PC-9 (cell line): ENCODE measurements at regions of chr2 and their contacts with region 1.

Region 1: GRCh38 chr2:18814387-18814786 is 225.0 kb upstream of the NT5C1B start:
- DNase-seq: no peak
- H3K4me3 ChIP-seq: no peak overlapping the region
- H3K27ac ChIP-seq: no peak overlapping the region
- H3K4me1 ChIP-seq: no peaks in the 10 kb centered on the region
- H3K27me3 ChIP-seq: no peaks in the 10 kb centered on the region
- CTCF ChIP-seq: no peak

Region 2: GRCh38 chr2:18855027-18855426 is 40.6 kb after region 1 on chr2:
- CTCF ChIA-PET with region 1: no interaction called
- POLR2A ChIA-PET with region 1: no interaction called
- intact Hi-C with region 1: no loop called
- DNase-seq: no peak
- H3K4me3 ChIP-seq: no peak overlapping the region
- H3K27ac ChIP-seq: no peak overlapping the region
- H3K4me1 ChIP-seq: no peaks in the 10 kb centered on the region
- H3K27me3 ChIP-seq: no peaks in the 10 kb centered on the region
- CTCF ChIP-seq: peak; percentile 58

Region 3: DNA sequence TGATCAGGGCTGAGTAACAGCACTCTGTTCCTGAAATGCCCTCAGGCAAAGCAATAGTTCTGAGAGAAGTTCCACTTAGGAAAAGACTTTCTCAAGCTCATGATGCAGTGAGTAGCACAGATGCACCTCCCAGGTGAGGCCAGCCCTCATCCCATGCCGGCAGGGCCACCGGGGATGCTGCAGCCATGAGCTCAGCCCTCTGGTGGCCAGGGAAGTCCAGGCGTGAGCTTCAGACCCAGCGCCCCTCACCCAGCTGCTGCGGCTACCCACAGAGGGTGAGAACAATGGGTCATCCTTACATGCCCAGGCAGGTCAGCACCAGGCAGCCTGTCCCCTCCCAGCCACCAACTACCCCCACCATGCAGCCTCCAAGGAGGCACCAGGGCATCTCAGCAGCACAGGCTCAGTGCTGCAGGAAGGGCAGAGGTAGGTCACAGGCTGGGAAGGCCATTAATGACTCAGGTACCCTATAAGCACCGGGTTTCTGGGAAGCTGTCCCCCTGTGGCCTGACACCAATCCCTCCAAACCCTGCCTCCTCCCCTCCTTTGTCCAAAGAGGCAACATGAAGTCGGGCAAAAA is 1036.8 kb after region 1 on chr2:
- CTCF ChIA-PET with region 1: no interaction called
- POLR2A ChIA-PET with region 1: interaction called, 10 read pairs
- intact Hi-C with region 1: no loop called
- DNase-seq: peak in 1 of 2 experiments; percentile 37
- H3K4me3 ChIP-seq: no peak overlapping the region
- H3K27ac ChIP-seq: no peak overlapping the region
- H3K4me1 ChIP-seq: peaks cover 2% of the 10 kb centered on the region; the same call in 1 of the 2 replicates
- H3K27me3 ChIP-seq: no peaks in the 10 kb centered on the region
- CTCF ChIP-seq: peak; percentile 40; the same call in 1 of the 2 replicates